Left cardiac atrium (tissue), 4 donors: ENCODE measurements at regions of chr6 and their contacts with region 1.

Region 1: DNA sequence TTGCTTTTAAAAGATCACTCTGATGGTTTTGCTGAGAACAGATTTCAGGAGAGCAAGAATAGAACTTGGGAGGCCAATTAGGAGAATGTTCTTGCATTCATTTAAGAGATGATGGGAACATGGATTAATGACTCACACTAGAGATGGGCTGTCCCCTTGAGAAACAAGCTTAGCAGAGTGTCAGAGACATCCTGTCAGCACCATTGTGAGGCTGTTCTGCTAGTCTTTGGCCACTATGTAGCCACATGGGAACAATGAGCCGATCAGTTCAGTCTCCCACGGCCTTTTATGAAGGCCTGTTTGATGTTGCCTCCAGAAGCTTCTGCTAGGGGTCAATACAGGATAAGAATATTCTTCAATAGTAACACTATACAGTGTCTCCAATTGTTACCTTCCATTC is 113.0 kb upstream of the EYA4 start:
- DNase-seq: peak; percentile 23
- ATAC-seq: peak in 1 of 2 donors; percentile 77

Region 2: GRCh38 chr6:133051240-133051639 is 77.0 kb before region 1 on chr6:
- intact Hi-C with region 1: loop called in 1 of 2 experiments (anchors 5 kb)
- DNase-seq: no peak
- ATAC-seq: no peak

Region 3: GRCh38 chr6:133070410-133071043 is 57.7 kb before region 1 on chr6:
- intact Hi-C with region 1: no loop called
- DNase-seq: no peak
- ATAC-seq: no peak